ENCODE measurements at regions of chr11 and their contacts with region 1.

Region 1: DNA sequence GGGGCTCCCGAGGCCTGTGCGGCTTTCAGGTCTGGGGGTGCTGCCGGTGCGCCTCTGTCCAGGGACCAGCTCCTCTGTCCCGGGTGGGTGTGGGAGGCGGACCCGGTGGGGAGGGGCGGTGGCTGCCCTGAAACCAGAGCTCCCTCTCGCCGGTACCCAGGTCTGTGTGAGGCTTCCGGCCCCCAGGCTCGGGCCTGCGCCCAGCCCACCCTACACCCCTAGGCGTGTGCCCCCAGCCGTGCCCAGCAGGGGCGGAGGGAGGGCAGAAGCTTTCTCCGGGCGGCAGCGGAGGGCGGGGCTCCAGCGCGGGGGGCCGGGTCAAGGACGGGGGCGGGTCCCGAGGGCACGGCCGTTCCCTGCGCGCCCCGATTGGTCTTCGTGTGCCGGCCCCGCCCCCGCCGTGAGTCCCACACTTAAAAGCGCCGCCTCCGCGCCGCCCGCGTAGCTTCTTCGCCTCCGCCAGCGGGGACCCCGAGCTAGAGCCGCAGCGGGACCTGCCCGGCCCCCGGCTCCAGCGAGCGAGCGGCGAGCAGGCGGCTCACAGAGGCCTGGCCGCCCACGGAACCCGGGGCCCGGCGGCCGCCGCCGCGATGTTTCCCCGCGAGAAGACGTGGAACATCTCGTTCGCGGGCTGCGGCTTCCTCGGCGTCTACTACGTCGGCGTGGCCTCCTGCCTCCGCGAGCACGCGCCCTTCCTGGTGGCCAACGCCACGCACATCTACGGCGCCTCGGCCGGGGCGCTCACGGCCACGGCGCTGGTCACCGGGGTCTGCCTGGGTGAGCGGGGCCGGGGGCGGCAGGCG is 616 bp downstream of the PNPLA2 start:
- DNase-seq: peak; percentile 85 to 96 (median 92)
- ATAC-seq: peak; percentile 77
- H3K4me3 ChIP-seq: peak overlapping the region; percentile 67 to 94
- H3K4me3 Mint-ChIP-seq: peak overlapping the region; percentile 87
- H3K27ac ChIP-seq: peak overlapping the region; percentile 78 to 88
- H3K27ac Mint-ChIP-seq: peak overlapping the region; percentile 88
- H3K4me1 ChIP-seq: peaks cover 21% of the 10 kb centered on the region
- H3K4me1 Mint-ChIP-seq: peaks cover 11% of the 10 kb centered on the region
- H3K27me3 ChIP-seq: no peaks in the 10 kb centered on the region
- H3K27me3 Mint-ChIP-seq: no peaks in the 10 kb centered on the region
- CTCF ChIP-seq: no peak

Region 2: GRCh38 chr11:803770-804598 is 15.3 kb before region 1 on chr11:
- CTCF ChIA-PET with region 1: interaction called, 6 read pairs
- POLR2A ChIA-PET with region 1: interaction called, 58 read pairs
- intact Hi-C with region 1: loop called (anchors 1 kb)
- DNase-seq: no peak
- ATAC-seq: no peak
- H3K4me3 ChIP-seq: peak overlapping the region; percentile 70 to 71
- H3K4me3 Mint-ChIP-seq: peak overlapping the region; percentile 80
- H3K27ac ChIP-seq: peak overlapping the region; percentile 57 to 62
- H3K27ac Mint-ChIP-seq: no peak overlapping the region
- H3K4me1 ChIP-seq: peaks cover 25% of the 10 kb centered on the region
- H3K4me1 Mint-ChIP-seq: peaks cover 10% of the 10 kb centered on the region
- H3K27me3 ChIP-seq: no peaks in the 10 kb centered on the region
- H3K27me3 Mint-ChIP-seq: no peaks in the 10 kb centered on the region
- CTCF ChIP-seq: no peak

Region 3: GRCh38 chr11:832321-833113 is 13.2 kb after region 1 on chr11 and contains the start of gene CD151:
- CTCF ChIA-PET with region 1: interaction called, 3 read pairs
- POLR2A ChIA-PET with region 1: interaction called, 30 read pairs
- intact Hi-C with region 1: loop called in 1 of 2 experiments (anchors 1 kb)
- DNase-seq: peak in 8 of 9 experiments; percentile 38 to 80 (median 48)
- ATAC-seq: peak; percentile 55
- H3K4me3 ChIP-seq: peak within 1 kb of the TSS; percentile 32 to 41
- H3K4me3 Mint-ChIP-seq: peak within 1 kb of the TSS; percentile 66
- H3K27ac ChIP-seq: no peak within 1 kb of the TSS
- H3K27ac Mint-ChIP-seq: no peak within 1 kb of the TSS
- H3K4me1 ChIP-seq: peaks cover 56% of the 10 kb centered on the region
- H3K4me1 Mint-ChIP-seq: peaks cover 36% of the 10 kb centered on the region
- H3K27me3 ChIP-seq: peaks cover 11 to 39% of the 10 kb centered on the region in 2 experiments
- H3K27me3 Mint-ChIP-seq: peaks cover 21% of the 10 kb centered on the region
- CTCF ChIP-seq: no peak
- total RNA-seq, gene CD151: 8.7 to 11.9 TPM

Region 4: GRCh38 chr11:842370-843002 is 23.2 kb after region 1 on chr11 and contains the starts of genes POLR2L and TSPAN4:
- CTCF ChIA-PET with region 1: no interaction called
- POLR2A ChIA-PET with region 1: interaction called, 30 read pairs
- intact Hi-C with region 1: loop called (anchors 1 kb)
- DNase-seq: peak; percentile 77 to 94 (median 88)
- ATAC-seq: peak; percentile 83
- H3K4me3 ChIP-seq: peak within 1 kb of the TSS; percentile 90 to 92
- H3K4me3 Mint-ChIP-seq: peak within 1 kb of the TSS; percentile 84
- H3K27ac ChIP-seq: peak within 1 kb of the TSS; percentile 50 to 78
- H3K27ac Mint-ChIP-seq: peak within 1 kb of the TSS; percentile 45
- H3K4me1 ChIP-seq: peaks cover 32% of the 10 kb centered on the region
- H3K4me1 Mint-ChIP-seq: peaks cover 25% of the 10 kb centered on the region
- H3K27me3 ChIP-seq: peaks cover 0 to 7% of the 10 kb centered on the region in 2 experiments
- H3K27me3 Mint-ChIP-seq: peaks cover 2% of the 10 kb centered on the region
- CTCF ChIP-seq: no peak
- total RNA-seq, gene POLR2L: 22.8 to 26.2 TPM
- total RNA-seq, gene TSPAN4: 2.1 to 2.2 TPM

Region 5: GRCh38 chr11:848380-848931 is 29.1 kb after region 1 on chr11:
- CTCF ChIA-PET with region 1: no interaction called
- POLR2A ChIA-PET with region 1: interaction called, 30 read pairs
- intact Hi-C with region 1: loop called in 1 of 2 experiments (anchors 2 kb)
- DNase-seq: peak; percentile 40 to 80 (median 68)
- ATAC-seq: peak; percentile 86
- H3K4me3 ChIP-seq: peak overlapping the region in 1 of 2 experiments; percentile 3
- H3K4me3 Mint-ChIP-seq: peak overlapping the region; percentile 26
- H3K27ac ChIP-seq: no peak overlapping the region
- H3K27ac Mint-ChIP-seq: no peak overlapping the region
- H3K4me1 ChIP-seq: peaks cover 26% of the 10 kb centered on the region
- H3K4me1 Mint-ChIP-seq: peaks cover 15% of the 10 kb centered on the region
- H3K27me3 ChIP-seq: peaks cover 0 to 22% of the 10 kb centered on the region in 2 experiments
- H3K27me3 Mint-ChIP-seq: peaks cover 5% of the 10 kb centered on the region
- CTCF ChIP-seq: peak; percentile 79

Measured in CD8-positive, alpha-beta T cell (primary cell).